ENCODE measurements at regions of chr9 and their contacts with region 1.

Region 1: DNA sequence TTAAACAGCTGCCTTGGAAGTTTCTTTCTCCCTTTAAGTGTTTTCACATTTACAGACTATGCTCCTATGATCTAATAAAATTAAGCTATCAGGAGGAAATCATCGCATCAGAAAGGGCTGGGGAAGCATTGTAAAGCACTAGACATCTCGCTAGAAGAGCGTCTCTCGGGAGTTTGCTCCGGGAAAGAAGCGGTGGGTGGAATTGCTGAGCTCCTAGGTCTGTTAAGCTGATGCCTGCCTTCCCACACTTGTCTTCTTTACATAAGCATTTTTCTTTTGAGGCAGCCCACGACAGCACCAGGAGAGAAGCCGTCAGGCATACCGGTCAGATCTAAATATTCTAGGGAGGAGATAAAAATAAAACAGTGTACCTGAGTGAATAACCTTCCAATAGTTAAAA is 541.7 kb upstream of the TUSC1 start:
- DNase-seq: no peak
- ATAC-seq: no peak
- H3K4me3 ChIP-seq: no peak overlapping the region
- H3K27ac ChIP-seq: no peak overlapping the region
- H3K4me1 ChIP-seq: no peaks in the 10 kb centered on the region
- H3K27me3 ChIP-seq: no peaks in the 10 kb centered on the region
- CTCF ChIP-seq: no peak
- POLR2A ChIP-seq: no peak
- RAD21 ChIP-seq: no peak

Region 2: GRCh38 chr9:25975667-25976066 is 244.3 kb before region 1 on chr9:
- CTCF ChIA-PET with region 1: no interaction called
- POLR2A ChIA-PET with region 1: no interaction called
- dilution Hi-C with region 1: no loop called
- in situ Hi-C with region 1: no loop called
- intact Hi-C with region 1: loop called (anchors 10 kb)
- DNase-seq: no peak
- ATAC-seq: no peak
- H3K4me3 ChIP-seq: no peak overlapping the region
- H3K27ac ChIP-seq: no peak overlapping the region
- H3K4me1 ChIP-seq: no peaks in the 10 kb centered on the region
- H3K27me3 ChIP-seq: no peaks in the 10 kb centered on the region
- CTCF ChIP-seq: no peak
- POLR2A ChIP-seq: no peak
- RAD21 ChIP-seq: no peak